A549 (cell line): ENCODE measurements at regions of chr2 and their contacts with region 1.

Region 1: GRCh38 chr2:15577071-15577735 is 14.5 kb upstream of the DDX1 start:
- DNase-seq: peak; percentile 66 to 85
- ATAC-seq: peak; percentile 93 to 99
- H3K4me3 ChIP-seq: no peak overlapping the region
- H3K27ac ChIP-seq: no peak overlapping the region
- H3K4me1 ChIP-seq: no peaks in the 10 kb centered on the region
- CTCF ChIP-seq: peak; percentile 94
- EP300 ChIP-seq: no peak
- POLR2A ChIP-seq: no peak
- RAD21 ChIP-seq: peak; percentile 83 to 95

Region 2: GRCh38 chr2:15359716-15360531 is 217.3 kb before region 1 on chr2:
- CTCF ChIA-PET with region 1: no interaction called
- POLR2A ChIA-PET with region 1: no interaction called
- DNase-seq: peak in 1 of 2 experiments; percentile 55
- ATAC-seq: peak; percentile 78 to 94; a peak in 5 of 6 replicates
- H3K4me3 ChIP-seq: no peak overlapping the region
- H3K27ac ChIP-seq: peak overlapping the region in 1 of 2 experiments; percentile 15; a peak in 1 of 6 replicates
- H3K4me1 ChIP-seq: peaks cover 17% of the 10 kb centered on the region
- CTCF ChIP-seq: no peak
- EP300 ChIP-seq: no peak
- POLR2A ChIP-seq: no peak
- RAD21 ChIP-seq: no peak

Region 3: DNA sequence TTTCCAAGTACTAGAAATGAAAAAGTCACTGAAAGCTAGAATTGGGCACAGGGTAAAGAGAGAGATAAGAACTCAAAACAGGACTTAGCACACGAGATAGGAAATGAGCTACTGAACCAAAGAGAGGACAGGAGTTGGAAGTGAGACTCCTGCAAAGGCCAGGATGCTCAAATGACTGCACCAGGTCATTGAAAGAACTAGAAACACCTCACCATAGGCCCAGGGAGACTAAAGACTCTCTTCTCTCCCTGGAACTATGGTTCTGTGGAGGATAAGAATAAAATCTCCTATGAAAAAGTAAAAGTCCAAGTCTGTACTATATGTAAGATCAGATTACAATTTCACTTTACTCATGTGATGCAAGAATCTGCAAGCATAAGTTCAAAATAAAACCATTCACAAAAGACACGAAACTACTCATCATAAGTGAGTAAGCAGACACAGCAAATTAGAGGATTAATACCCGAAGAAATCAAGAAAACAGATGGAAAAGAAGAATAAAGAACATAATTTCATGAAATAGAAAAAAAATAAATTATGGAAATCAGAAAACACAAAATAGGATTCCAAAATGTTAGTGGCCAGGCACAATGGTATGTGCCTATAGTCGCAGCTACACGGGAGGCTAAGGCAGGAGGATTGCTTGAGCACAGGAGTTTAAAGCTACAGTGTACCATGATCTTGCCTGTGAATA is 22.5 kb before region 1 on chr2:
- CTCF ChIA-PET with region 1: interaction called, 43 read pairs
- POLR2A ChIA-PET with region 1: no interaction called
- DNase-seq: no peak
- ATAC-seq: no peak
- H3K4me3 ChIP-seq: no peak overlapping the region
- H3K27ac ChIP-seq: no peak overlapping the region
- H3K4me1 ChIP-seq: peaks cover 3% of the 10 kb centered on the region; the same call in 2 of the 3 replicates
- CTCF ChIP-seq: no peak
- EP300 ChIP-seq: no peak
- POLR2A ChIP-seq: no peak
- RAD21 ChIP-seq: no peak

Region 4: GRCh38 chr2:15560988-15561573 is 16.1 kb before region 1 on chr2 and contains the start of gene NBAS:
- CTCF ChIA-PET with region 1: interaction called, 43 read pairs
- POLR2A ChIA-PET with region 1: interaction called, 3 read pairs
- DNase-seq: peak; percentile 82 to 92
- ATAC-seq: peak; percentile 92 to 95
- H3K4me3 ChIP-seq: peak within 1 kb of the TSS; percentile 64
- H3K27ac ChIP-seq: peak within 1 kb of the TSS; percentile 76 to 81
- H3K4me1 ChIP-seq: peaks cover 10% of the 10 kb centered on the region
- CTCF ChIP-seq: no peak
- EP300 ChIP-seq: no peak
- POLR2A ChIP-seq: peak; percentile 85
- RAD21 ChIP-seq: no peak
- polyA plus RNA-seq, gene NBAS: 34.9 and 45.1 TPM in 2 replicates

Region 5: DNA sequence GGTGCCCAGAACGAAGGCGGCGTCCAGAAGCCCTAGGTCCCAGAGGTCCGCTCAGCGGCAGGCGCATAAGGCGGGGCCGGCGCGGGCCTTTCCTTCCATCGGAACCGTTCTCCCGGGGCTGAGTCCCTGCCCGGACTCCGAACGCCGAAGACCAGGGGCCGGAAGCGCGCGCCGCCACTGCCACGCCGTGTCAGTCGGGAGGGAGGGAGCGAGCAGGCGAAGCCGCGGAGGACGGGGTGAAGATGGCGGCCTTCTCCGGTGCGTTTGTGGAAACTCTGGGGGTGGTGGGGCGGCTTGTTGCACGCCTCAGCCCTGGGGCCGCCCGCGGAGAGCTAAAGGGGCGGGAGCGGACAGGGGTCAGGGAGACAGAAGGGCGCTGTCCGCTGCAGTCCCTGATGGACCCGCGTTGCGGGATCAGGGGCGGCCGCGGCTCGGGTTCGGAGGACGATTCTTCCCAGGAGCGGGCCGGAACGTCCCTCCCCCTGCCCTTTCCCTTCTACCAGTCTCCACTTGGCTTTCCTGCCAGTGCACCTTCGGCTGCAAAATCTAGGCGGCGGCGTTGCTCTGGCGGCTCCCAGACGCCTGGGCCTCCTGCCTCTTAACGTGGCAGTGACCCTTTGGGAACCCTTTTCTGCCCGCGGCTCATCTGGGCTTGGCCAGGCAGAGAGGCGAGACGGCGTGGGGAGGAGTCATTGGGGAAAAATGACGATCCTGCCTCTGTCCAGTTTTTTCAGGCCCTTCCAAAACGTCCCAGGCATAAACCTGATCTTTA is 14.7 kb after region 1 on chr2 and contains the start of gene DDX1:
- CTCF ChIA-PET with region 1: interaction called, 147 read pairs
- POLR2A ChIA-PET with region 1: interaction called, 9 read pairs
- DNase-seq: peak; percentile 83 to 92
- ATAC-seq: peak; percentile 94 to 95
- H3K4me3 ChIP-seq: peak within 1 kb of the TSS; percentile 82
- H3K27ac ChIP-seq: peak within 1 kb of the TSS; percentile 93
- H3K4me1 ChIP-seq: peaks cover 23% of the 10 kb centered on the region
- CTCF ChIP-seq: no peak
- EP300 ChIP-seq: no peak
- POLR2A ChIP-seq: peak; percentile 84
- RAD21 ChIP-seq: no peak
- polyA plus RNA-seq, gene DDX1: 166 and 214 TPM in 2 replicates

Region 6: GRCh38 chr2:15748736-15749323 is 171.6 kb after region 1 on chr2:
- CTCF ChIA-PET with region 1: no interaction called
- POLR2A ChIA-PET with region 1: no interaction called
- DNase-seq: peak; percentile 74 to 75
- ATAC-seq: peak; percentile 70 to 94
- H3K4me3 ChIP-seq: no peak overlapping the region
- H3K27ac ChIP-seq: no peak overlapping the region
- H3K4me1 ChIP-seq: no peaks in the 10 kb centered on the region
- CTCF ChIP-seq: peak; percentile 65
- EP300 ChIP-seq: no peak
- POLR2A ChIP-seq: no peak
- RAD21 ChIP-seq: peak; percentile 57 to 61

Region 7: GRCh38 chr2:16069933-16070647 is 492.9 kb after region 1 on chr2:
- CTCF ChIA-PET with region 1: no interaction called
- POLR2A ChIA-PET with region 1: no interaction called
- DNase-seq: no peak
- ATAC-seq: peak in 1 of 2 experiments; percentile 46; a peak in 3 of 6 replicates
- H3K4me3 ChIP-seq: no peak overlapping the region
- H3K27ac ChIP-seq: no peak overlapping the region
- H3K4me1 ChIP-seq: no peaks in the 10 kb centered on the region
- CTCF ChIP-seq: no peak
- EP300 ChIP-seq: no peak
- POLR2A ChIP-seq: no peak
- RAD21 ChIP-seq: no peak